OCI-LY7 (cell line): ENCODE measurements at regions of chr9 and their contacts with region 1.

Region 1: GRCh38 chr9:6055213-6055612 is 39.8 kb upstream of the RANBP6 start:
- DNase-seq: peak; percentile 77
- H3K4me3 ChIP-seq: no peak overlapping the region
- H3K27ac ChIP-seq: no peak overlapping the region
- H3K4me1 ChIP-seq: peaks cover 17% of the 10 kb centered on the region
- CTCF ChIP-seq: peak; percentile 81

Region 2: DNA sequence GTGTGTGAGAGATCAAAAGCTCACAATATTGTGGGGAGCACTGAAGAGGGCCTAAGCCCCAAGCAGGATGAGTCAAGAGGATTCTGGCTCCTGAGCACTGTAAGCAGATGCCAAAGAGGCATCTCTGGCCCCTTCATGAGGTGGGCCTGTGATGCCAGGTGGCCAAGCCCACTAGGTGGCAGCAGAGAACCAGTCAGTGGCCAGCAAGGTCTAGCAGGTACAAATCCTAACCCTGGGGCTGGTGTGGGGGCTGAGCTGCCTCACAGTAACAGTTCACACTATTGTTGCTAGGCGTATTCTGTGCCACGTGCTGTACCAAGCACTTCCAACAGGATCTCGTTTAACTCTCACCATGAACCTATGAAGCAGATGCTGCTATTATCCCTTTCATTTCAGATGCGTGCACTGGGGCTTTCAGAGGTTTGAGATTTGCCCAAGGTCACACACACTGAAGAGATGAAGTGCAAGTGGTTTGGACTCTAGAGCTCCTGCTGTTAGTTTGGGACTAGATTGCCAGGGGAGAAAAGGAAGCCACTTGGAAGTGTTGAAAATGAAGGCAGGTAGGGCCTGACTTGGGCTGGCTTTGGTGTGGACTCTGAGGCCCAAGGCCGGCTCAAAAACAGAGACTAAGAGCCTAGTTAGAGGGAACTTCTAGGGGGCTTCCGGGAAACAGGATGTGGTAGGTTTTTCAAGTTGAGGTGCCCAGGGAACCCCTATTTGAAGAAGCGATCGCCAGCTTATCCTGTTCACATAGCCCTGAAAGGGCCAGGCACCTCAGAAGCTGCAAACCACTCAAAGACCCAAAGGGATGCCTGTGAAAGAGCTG is 168.9 kb before region 1 on chr9:
- CTCF ChIA-PET with region 1: interaction called, 7 read pairs
- POLR2A ChIA-PET with region 1: interaction called, 5 read pairs
- intact Hi-C with region 1: loop called (anchors 1 kb)
- DNase-seq: peak; percentile 75
- H3K4me3 ChIP-seq: no peak overlapping the region
- H3K27ac ChIP-seq: no peak overlapping the region
- H3K4me1 ChIP-seq: no peaks in the 10 kb centered on the region
- CTCF ChIP-seq: peak; percentile 92

Region 3: DNA sequence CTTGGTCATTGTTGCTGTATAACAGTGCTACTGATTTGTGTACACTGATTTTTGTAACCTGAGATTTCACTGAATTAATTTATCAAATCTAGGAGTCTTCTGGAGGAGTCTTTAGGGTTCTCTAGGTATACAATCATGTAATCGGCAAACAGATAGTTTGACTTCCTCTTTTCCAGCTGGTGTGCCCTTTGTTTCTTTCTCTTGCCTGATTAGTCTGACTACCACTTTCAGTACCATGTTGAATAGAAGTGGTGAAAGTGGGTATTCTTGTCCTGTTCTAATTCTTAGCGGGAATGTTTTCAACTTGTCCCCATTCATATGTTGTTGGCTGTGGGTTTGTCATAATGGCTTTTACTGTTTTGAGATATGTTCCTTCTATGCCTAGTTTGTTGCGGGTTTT is 15.1 kb before region 1 on chr9:
- CTCF ChIA-PET with region 1: interaction called, 13 read pairs
- POLR2A ChIA-PET with region 1: interaction called, 4 read pairs
- intact Hi-C with region 1: no loop called
- DNase-seq: no peak
- H3K4me3 ChIP-seq: no peak overlapping the region
- H3K27ac ChIP-seq: no peak overlapping the region
- H3K4me1 ChIP-seq: no peaks in the 10 kb centered on the region
- CTCF ChIP-seq: no peak

Region 4: DNA sequence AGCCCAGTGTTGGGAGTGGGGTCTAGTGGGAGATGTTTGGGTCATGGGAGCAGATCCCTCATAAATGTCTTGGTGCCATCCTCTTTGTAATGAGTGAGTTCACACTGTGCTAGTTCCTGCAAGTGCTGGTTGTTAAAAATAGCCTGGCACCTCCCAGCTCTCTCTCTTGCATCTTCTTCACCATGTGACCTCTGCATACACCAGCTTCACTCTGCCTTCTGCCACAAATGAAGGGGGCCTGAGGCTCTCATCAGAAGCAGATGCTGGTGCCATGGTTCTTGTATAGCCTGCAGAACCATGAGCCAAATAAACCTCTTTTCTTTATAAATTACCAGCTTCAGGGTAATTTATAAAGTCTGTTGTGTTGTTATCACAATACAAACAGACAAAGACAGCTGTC is 35.1 kb after region 1 on chr9:
- CTCF ChIA-PET with region 1: no interaction called
- POLR2A ChIA-PET with region 1: no interaction called
- intact Hi-C with region 1: no loop called
- DNase-seq: no peak
- H3K4me3 ChIP-seq: no peak overlapping the region
- H3K27ac ChIP-seq: no peak overlapping the region
- H3K4me1 ChIP-seq: peaks cover 10% of the 10 kb centered on the region
- CTCF ChIP-seq: no peak

Region 5: GRCh38 chr9:6305954-6306563 is 250.8 kb after region 1 on chr9:
- CTCF ChIA-PET with region 1: interaction called, 6 read pairs
- POLR2A ChIA-PET with region 1: interaction called, 3 read pairs
- intact Hi-C with region 1: loop called (anchors 1 kb)
- DNase-seq: peak; percentile 50
- H3K4me3 ChIP-seq: no peak overlapping the region
- H3K27ac ChIP-seq: no peak overlapping the region
- H3K4me1 ChIP-seq: no peaks in the 10 kb centered on the region
- CTCF ChIP-seq: peak; percentile 79

Region 6: GRCh38 chr9:6566409-6567139 is 511.4 kb after region 1 on chr9:
- CTCF ChIA-PET with region 1: no interaction called
- POLR2A ChIA-PET with region 1: no interaction called
- intact Hi-C with region 1: loop called (anchors 5 kb)
- DNase-seq: no peak
- H3K4me3 ChIP-seq: no peak overlapping the region
- H3K27ac ChIP-seq: no peak overlapping the region
- H3K4me1 ChIP-seq: no peaks in the 10 kb centered on the region
- CTCF ChIP-seq: no peak